A673 (cell line): ENCODE measurements at regions of chr1 and their contacts with region 1.

Region 1: DNA sequence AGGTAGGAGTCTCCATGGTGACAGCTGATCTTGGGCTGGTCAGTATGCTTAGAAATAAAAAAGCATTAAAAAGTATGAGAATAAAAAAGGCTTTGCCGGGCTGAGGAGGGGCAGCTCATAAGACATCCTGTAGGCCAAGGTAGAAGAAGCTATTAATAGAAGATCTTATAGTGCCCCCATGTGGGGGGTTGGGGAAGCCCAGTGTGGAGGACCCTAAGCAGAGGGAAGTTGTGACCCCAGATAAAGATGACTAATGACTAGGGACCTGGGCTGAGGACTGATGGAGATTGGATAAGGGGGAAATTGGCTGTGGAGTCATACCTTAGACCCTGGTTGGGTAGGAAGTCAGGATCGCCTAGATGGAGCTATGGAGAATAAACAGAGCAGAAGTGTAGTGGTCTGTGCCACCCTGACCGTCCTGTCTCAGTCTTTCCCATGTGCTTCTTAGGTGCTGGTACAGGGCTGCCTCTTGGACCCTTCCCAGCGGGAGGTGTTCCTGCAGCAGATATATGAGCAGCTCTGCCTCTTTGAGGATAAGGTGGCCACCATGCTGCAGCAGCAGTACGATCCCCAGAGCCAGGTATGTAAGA is 25.0 kb downstream of the SZT2 start:
- DNase-seq: peak; percentile 77
- H3K4me3 ChIP-seq: no peak overlapping the region
- H3K27ac ChIP-seq: no peak overlapping the region
- H3K4me1 ChIP-seq: no peaks in the 10 kb centered on the region
- H3K27me3 ChIP-seq: no peaks in the 10 kb centered on the region
- CTCF ChIP-seq: peak; percentile 70

Region 2: DNA sequence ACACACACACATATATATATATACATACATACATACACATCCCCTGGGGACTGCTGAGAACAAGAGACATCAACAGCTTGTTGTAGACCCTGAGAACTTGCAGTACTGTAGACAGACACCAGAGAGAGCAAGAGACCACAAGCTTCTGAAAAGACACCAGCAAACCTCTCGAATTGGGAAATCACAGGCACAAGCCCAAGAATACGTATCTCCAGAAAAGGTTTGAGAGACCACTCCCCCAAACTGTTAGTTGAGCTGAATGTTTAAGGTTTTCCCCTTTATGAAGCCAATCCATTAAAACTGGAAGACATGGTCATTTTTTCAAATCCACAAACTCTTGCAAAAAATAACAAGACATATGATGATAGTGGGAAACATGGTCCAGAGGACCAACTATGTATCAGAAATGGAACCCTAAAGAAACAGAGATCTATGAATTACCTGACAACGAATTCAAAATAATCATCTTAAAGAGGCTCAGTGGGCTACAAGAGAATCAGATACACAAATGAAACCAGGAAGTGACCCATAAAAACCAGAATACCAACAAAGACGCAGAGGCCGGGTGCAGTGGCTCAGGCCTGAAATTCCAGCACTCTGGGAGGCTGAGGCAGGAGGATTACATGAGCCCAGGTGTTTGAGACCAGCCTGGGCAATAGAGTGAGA is 501.2 kb before region 1 on chr1:
- CTCF ChIA-PET with region 1: interaction called, 12 read pairs
- POLR2A ChIA-PET with region 1: no interaction called
- intact Hi-C with region 1: no loop called
- DNase-seq: peak; percentile 90
- H3K4me3 ChIP-seq: no peak overlapping the region
- H3K27ac ChIP-seq: no peak overlapping the region
- H3K4me1 ChIP-seq: no peaks in the 10 kb centered on the region
- H3K27me3 ChIP-seq: no peaks in the 10 kb centered on the region
- CTCF ChIP-seq: peak; percentile 67

Region 3: DNA sequence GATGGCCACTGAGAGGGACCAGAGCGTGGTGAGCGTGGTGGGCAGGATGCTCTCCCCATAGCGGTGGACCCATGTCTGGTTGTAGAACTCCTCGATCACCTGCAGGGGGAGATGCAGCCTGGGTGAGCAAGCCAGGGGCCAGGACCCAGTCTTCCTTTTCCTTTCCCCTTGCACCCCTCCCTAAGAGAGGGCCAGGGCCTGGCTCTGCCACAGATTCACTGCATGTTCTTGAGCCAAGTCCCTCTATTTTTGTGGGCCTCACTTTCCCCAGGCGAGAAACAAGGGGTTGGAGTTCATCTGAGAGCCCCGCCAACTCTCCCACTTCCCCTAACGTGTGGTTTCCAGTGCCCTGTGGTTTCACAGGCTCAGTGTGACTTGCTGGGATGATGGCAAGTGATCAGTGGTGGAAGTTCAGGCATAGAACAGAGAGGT is 483.6 kb before region 1 on chr1:
- CTCF ChIA-PET with region 1: interaction called, 14 read pairs
- POLR2A ChIA-PET with region 1: no interaction called
- intact Hi-C with region 1: no loop called
- DNase-seq: peak; percentile 75
- H3K4me3 ChIP-seq: no peak overlapping the region
- H3K27ac ChIP-seq: peak overlapping the region; percentile 7
- H3K4me1 ChIP-seq: no peaks in the 10 kb centered on the region
- H3K27me3 ChIP-seq: no peaks in the 10 kb centered on the region
- CTCF ChIP-seq: peak; percentile 71

Region 4: DNA sequence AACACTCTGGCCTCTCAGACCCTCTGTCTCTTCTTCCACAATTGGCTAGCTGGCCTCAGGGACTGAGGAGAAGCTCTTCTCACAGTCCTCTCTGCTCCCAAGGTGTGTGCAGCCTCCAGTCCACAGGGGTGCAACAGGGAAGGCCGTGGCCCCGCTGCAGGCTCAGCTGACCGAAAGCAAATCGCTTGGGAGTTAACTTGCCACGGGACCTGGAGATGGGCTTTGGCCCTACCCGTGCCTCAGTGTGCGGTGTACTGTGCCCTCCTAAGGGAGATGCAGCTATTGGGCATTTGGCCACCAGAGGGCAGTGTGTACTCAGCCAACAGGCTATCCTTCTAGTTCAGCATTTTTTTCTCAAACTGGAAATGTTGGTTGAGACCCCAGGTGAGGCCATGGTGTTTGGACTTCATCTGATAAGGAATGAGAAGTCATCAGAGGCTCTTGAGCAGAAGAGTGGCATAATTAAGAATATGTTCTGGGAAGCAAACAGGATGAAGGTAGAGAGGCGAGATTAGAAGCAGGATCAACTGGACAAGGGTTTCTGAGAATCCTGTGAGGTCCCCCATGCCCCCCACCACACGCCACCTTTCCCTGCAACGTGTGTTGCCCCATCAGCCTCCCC is 187.5 kb before region 1 on chr1:
- CTCF ChIA-PET with region 1: interaction called, 23 read pairs
- POLR2A ChIA-PET with region 1: no interaction called
- intact Hi-C with region 1: loop called (anchors 1 kb)
- DNase-seq: peak; percentile 82
- H3K4me3 ChIP-seq: no peak overlapping the region
- H3K27ac ChIP-seq: no peak overlapping the region
- H3K4me1 ChIP-seq: no peaks in the 10 kb centered on the region
- H3K27me3 ChIP-seq: no peaks in the 10 kb centered on the region
- CTCF ChIP-seq: peak; percentile 96

Region 5: GRCh38 chr1:43395523-43395922 is 19.2 kb before region 1 on chr1:
- CTCF ChIA-PET with region 1: interaction called, 4 read pairs
- POLR2A ChIA-PET with region 1: no interaction called
- intact Hi-C with region 1: loop called (anchors 2 kb)
- DNase-seq: no peak
- H3K4me3 ChIP-seq: no peak overlapping the region
- H3K27ac ChIP-seq: no peak overlapping the region
- H3K4me1 ChIP-seq: no peaks in the 10 kb centered on the region
- H3K27me3 ChIP-seq: no peaks in the 10 kb centered on the region
- CTCF ChIP-seq: no peak

Region 6: GRCh38 chr1:43529206-43529731 is 114.5 kb after region 1 on chr1:
- CTCF ChIA-PET with region 1: no interaction called
- POLR2A ChIA-PET with region 1: no interaction called
- intact Hi-C with region 1: no loop called
- DNase-seq: peak; percentile 88
- H3K4me3 ChIP-seq: no peak overlapping the region
- H3K27ac ChIP-seq: no peak overlapping the region
- H3K4me1 ChIP-seq: peaks cover 17% of the 10 kb centered on the region
- H3K27me3 ChIP-seq: no peaks in the 10 kb centered on the region
- CTCF ChIP-seq: peak; percentile 97

Region 7: DNA sequence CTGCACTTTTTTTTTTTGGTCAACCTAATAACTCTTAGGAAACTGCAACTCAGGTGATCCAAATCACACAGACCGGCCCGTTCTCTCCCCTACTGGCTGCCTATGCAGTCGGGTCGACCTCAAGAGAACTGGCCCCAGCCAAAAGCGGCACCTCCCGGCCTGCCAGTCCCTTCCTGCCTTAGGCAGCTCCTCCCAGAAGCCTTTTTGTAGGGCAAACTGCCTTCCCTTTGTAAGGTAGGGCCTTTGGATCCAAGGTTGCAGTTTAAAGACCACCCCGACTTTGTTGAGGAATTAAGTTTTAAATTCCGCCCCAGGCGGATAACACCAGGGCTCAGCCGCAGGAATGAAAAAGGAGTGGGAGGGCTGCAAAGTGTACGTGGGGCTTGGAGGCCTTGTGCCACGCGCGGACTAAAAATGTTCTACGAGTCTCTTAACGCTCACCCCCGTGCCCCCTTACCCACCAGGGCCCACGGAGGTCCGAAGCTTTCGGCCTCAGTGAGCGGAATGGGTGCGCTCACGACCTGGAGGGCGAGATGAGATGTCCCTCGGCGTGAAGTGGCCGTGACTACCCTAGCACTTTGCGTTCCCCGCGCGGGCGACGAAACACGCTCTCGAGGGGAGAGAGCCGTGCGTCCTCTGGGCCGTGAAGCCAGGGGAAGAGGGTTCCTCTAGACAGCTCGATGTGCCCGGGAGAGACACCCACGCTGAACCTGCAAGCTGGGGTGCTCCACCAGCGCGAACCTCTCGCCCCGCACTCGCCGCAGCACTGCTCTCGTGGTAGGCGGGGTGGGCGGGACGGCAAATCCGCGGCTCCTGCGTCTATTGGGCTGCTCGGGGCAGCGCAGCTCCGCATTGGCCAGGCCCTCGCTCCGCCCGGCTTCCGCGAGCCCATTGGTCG is 292.1 kb after region 1 on chr1:
- CTCF ChIA-PET with region 1: no interaction called
- POLR2A ChIA-PET with region 1: no interaction called
- intact Hi-C with region 1: no loop called
- DNase-seq: peak; percentile 97
- H3K4me3 ChIP-seq: peak overlapping the region; percentile 98
- H3K27ac ChIP-seq: peak overlapping the region; percentile 94
- H3K4me1 ChIP-seq: peaks cover 23% of the 10 kb centered on the region
- H3K27me3 ChIP-seq: no peaks in the 10 kb centered on the region
- CTCF ChIP-seq: no peak

Region 8: GRCh38 chr1:43729816-43730463 is 315.2 kb after region 1 on chr1:
- CTCF ChIA-PET with region 1: no interaction called
- POLR2A ChIA-PET with region 1: no interaction called
- intact Hi-C with region 1: no loop called
- DNase-seq: no peak
- H3K4me3 ChIP-seq: no peak overlapping the region
- H3K27ac ChIP-seq: no peak overlapping the region
- H3K4me1 ChIP-seq: no peaks in the 10 kb centered on the region
- H3K27me3 ChIP-seq: no peaks in the 10 kb centered on the region
- CTCF ChIP-seq: no peak